HEK293 (cell line): ENCODE measurements at regions of chr11 and their contacts with region 1.

Region 1: GRCh38 chr11:111982019-111982464 is 43.2 kb upstream of the DLAT start:
- H3K4me3 ChIP-seq: no peak overlapping the region
- H3K27ac ChIP-seq: no peak overlapping the region
- H3K4me1 ChIP-seq: peaks cover 3% of the 10 kb centered on the region; the same call in 1 of the 2 replicates
- CTCF ChIP-seq: no peak

Region 2: DNA sequence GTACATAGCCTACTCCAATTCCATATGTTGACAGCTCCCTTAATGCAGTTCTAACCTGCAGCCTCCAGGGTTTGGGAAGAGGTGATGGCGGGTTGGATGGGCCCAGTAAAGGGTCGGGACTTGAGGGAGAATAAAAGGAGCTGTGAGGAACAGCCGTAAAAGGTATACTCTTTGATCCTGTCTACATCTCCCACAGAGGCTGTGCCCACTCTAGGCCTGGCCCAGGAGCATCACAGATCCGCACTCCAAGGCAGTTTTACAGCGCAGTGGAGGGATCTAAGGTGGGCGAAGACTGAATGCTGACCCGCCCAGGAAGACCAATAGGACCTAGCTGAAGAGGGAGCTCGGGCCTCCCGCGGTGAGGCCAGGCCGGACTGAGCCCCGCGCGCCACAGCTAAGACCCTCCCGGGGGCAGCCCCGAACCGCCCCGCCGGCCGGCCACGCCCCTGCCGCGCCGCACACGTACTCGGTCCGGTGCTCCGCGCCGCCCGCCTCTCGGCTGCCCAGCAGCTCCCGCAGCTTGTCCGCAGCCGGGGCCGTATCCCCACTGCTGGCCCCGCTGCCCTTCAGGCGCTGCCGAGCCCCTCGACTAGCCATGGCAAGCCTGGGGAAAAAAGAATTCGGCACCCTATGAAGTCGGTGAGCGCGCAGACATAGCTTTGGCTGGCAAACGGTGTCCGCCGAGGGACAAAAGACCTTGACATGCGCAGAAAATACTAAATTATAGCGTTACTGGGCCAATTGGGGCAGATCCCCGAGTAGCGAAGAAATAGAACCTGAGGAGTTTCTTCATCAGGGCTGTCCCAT is 111.0 kb before region 1 on chr11 and contains the start of gene ALG9:
- CTCF ChIA-PET with region 1: interaction called, 17 read pairs
- POLR2A ChIA-PET with region 1: interaction called, 8 read pairs
- H3K4me3 ChIP-seq: peak within 1 kb of the TSS; percentile 89
- H3K27ac ChIP-seq: peak within 1 kb of the TSS; percentile 66; the same call in 1 of the 2 replicates
- H3K4me1 ChIP-seq: no peaks in the 10 kb centered on the region
- CTCF ChIP-seq: peak; percentile 44; the same call in 1 of the 2 replicates

Region 3: DNA sequence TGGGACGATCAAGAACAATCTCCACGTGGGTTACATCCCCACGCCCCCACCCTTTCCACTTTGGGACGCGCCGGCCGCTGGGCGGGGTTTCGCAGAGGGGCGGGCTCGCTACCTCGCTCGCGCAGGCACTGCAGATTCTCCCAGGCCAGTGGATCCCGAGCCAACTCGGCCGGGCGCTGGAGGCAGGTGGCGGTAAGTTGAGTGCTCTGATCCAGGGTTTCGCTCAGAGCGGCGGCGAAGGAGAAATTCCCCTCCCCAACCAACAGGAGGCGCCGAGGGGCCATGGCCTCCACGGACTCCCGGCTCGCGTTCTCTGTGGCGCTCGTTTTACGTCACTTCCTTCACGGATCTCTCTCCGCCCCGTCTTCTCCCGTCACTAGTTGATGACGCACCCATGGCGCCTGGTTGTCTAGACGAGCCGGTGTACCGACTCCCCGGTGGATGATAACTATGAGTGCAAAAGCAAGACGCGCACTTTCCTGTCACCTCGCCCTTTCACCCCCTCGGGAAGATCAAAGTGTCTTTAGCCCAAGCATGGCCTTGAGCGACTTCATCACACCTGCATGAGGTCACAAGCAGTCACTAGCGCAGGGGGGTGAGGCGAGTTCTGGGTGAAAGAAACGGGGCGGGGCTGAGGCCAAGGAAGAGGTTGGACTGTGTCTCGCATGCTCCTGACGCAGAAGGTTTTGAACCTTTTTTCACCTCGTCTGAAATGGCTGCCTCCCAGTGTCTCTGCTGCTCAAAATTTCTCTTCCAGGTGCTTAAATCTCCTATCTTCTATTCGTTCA is 103.0 kb before region 1 on chr11 and contains the starts of genes CFAP68 and FDXACB1:
- CTCF ChIA-PET with region 1: interaction called, 19 read pairs
- POLR2A ChIA-PET with region 1: no interaction called
- H3K4me3 ChIP-seq: peak within 1 kb of the TSS; percentile 65
- H3K27ac ChIP-seq: peak within 1 kb of the TSS; percentile 52
- H3K4me1 ChIP-seq: no peaks in the 10 kb centered on the region
- CTCF ChIP-seq: peak; percentile 94

Region 4: DNA sequence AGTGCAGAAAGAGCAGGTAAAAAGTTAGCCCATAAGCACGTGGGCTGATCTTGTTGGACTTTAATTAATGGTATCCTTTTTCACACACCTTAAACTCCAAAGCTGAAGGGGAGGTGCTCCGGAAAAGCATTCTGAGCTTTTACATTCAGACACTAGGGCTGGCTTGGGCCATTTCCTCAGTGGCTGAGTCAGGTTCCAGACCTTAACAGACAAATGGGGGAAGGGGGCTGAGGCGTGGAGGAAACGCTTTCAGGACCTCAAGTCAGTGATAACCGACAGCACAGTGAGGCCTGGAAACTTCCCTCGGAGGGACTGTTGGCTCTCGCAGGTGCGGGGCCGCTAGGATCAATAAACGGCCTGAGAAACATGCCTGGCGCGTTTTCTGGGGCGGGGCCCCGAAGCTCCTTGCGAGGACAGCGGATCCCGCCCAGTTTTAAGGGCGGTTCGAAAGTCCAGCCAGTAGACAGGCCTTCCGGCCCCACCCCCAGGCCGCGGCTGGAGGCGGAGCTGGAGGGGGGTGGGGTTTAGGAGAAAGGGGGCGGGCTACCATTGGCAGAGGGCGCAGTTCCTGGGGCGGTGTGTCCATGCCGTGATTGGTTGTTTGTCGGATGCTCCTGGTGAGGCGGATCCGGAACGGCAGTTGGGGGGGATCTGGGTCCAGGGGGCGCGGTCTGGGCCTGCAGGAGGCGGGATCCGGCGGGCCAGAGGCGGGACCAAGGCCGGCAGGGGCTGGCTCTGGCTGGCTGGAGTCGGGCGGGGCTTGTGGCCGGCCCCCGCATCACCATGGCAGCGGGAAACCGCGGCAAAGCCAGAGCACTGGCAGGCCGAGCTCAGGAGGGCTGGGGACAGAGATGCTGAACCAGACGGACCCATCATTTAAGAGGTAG is 55.3 kb before region 1 on chr11:
- CTCF ChIA-PET with region 1: interaction called, 166 read pairs
- POLR2A ChIA-PET with region 1: interaction called, 7 read pairs
- H3K4me3 ChIP-seq: peak overlapping the region; percentile 30
- H3K27ac ChIP-seq: no peak overlapping the region
- H3K4me1 ChIP-seq: no peaks in the 10 kb centered on the region
- CTCF ChIP-seq: no peak

Region 5: DNA sequence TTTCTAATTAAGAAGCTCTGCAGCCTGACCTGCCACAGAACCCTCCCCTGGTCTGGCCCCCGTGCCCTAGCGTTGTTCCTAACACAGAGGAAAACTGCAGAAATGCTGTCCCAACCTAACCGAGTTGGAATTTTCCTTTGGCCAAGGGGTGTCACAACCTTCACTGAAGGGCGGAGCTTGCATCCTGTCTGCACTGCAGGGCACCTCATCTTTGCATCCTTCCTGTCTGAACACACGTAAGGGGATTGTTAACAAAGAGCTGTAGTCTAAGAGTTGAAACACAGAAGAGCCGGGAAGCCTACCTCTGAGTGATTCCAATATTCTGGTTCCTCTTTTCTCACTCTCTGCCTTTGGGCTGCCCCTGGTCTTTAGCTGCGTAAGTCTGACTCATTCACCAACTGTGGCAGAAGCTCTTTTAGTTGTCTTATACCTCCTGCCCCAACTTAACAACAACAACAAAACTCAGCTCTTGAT is 43.3 kb before region 1 on chr11:
- CTCF ChIA-PET with region 1: interaction called, 166 read pairs
- POLR2A ChIA-PET with region 1: interaction called, 4 read pairs
- H3K4me3 ChIP-seq: no peak overlapping the region
- H3K27ac ChIP-seq: no peak overlapping the region
- H3K4me1 ChIP-seq: peaks cover 2% of the 10 kb centered on the region; the same call in 1 of the 2 replicates
- CTCF ChIP-seq: no peak

Region 6: DNA sequence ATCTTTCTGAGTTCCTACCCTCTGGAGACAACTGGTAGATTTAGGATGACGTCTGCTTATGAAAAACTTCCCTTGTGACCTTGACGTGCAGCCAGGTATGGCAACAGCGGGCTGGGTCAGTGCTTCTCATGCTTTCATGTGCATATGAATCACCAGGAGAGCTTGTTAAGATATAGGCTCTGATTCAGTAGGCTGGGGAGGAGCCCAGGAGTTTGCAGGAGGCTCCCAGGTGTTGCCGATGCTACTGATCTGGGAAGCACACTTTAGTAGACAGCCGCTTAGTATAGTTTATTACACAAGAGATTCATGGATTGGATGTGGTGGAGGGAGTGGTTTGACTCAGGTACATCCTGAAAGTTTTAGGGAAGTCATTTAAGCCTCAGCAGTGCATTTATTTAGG is 21.1 kb before region 1 on chr11:
- CTCF ChIA-PET with region 1: interaction called, 13 read pairs
- POLR2A ChIA-PET with region 1: no interaction called
- H3K4me3 ChIP-seq: no peak overlapping the region
- H3K27ac ChIP-seq: no peak overlapping the region
- H3K4me1 ChIP-seq: no peaks in the 10 kb centered on the region
- CTCF ChIP-seq: no peak

Region 7: GRCh38 chr11:111992206-111992855 is 10.3 kb after region 1 on chr11:
- CTCF ChIA-PET with region 1: interaction called, 25 read pairs
- POLR2A ChIA-PET with region 1: no interaction called
- H3K4me3 ChIP-seq: no peak overlapping the region
- H3K27ac ChIP-seq: no peak overlapping the region
- H3K4me1 ChIP-seq: no peaks in the 10 kb centered on the region
- CTCF ChIP-seq: no peak